Keratinocyte (primary cell): ENCODE measurements at regions of chr2 and their contacts with region 1.

Region 1: GRCh38 chr2:191265311-191266170 is 20.3 kb downstream of the MYO1B start:
- DNase-seq: no peak
- H3K4me3 ChIP-seq: no peak overlapping the region
- H3K27ac ChIP-seq: peak overlapping the region; percentile 39
- H3K4me1 ChIP-seq: peaks cover 43% of the 10 kb centered on the region
- H3K27me3 ChIP-seq: no peaks in the 10 kb centered on the region
- CTCF ChIP-seq: no peak

Region 2: DNA sequence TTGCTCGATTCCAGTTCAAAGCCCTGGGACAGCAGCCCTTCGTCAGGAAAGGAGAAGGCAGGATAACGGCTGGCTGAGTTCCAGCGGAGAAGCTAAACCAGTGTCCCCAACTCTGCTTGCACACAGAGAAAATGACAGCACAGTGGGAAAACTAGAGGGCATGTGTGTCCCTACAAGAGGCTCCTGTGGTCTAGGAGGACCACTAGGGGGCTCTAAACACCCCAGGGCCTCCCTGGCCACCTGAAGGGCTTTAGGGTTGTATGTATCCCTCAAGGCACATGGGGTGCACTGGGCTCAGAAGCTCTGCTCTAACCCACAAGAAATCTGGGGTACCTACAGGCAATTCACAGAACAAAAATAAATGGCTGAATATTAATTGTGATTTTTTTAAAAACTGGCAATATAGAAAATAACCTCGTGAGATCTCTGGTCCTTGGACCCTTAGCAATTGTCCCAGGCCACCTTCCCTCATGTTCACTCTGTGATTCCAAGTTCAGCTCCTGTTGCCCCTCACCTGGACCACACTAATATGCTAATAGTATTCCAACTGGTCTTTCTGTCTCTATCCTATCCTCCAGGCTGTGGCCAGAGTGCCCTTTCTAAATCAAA is 269.1 kb before region 1 on chr2:
- dilution Hi-C with region 1: no loop called
- DNase-seq: no peak
- H3K4me3 ChIP-seq: no peak overlapping the region
- H3K27ac ChIP-seq: no peak overlapping the region
- H3K4me1 ChIP-seq: peaks cover 12% of the 10 kb centered on the region
- H3K27me3 ChIP-seq: no peaks in the 10 kb centered on the region
- CTCF ChIP-seq: peak; percentile 47 to 64 (median 59)

Region 3: GRCh38 chr2:191302459-191303139 is 37.1 kb after region 1 on chr2:
- dilution Hi-C with region 1: loop called (anchors 5 kb)
- DNase-seq: no peak
- H3K4me3 ChIP-seq: no peak overlapping the region
- H3K27ac ChIP-seq: peak overlapping the region; percentile 91
- H3K4me1 ChIP-seq: peaks cover 59% of the 10 kb centered on the region
- H3K27me3 ChIP-seq: no peaks in the 10 kb centered on the region
- CTCF ChIP-seq: peak; percentile 40 to 48 (median 44)